ENCODE measurements at regions of chr1 and their contacts with region 1.

Region 1: DNA sequence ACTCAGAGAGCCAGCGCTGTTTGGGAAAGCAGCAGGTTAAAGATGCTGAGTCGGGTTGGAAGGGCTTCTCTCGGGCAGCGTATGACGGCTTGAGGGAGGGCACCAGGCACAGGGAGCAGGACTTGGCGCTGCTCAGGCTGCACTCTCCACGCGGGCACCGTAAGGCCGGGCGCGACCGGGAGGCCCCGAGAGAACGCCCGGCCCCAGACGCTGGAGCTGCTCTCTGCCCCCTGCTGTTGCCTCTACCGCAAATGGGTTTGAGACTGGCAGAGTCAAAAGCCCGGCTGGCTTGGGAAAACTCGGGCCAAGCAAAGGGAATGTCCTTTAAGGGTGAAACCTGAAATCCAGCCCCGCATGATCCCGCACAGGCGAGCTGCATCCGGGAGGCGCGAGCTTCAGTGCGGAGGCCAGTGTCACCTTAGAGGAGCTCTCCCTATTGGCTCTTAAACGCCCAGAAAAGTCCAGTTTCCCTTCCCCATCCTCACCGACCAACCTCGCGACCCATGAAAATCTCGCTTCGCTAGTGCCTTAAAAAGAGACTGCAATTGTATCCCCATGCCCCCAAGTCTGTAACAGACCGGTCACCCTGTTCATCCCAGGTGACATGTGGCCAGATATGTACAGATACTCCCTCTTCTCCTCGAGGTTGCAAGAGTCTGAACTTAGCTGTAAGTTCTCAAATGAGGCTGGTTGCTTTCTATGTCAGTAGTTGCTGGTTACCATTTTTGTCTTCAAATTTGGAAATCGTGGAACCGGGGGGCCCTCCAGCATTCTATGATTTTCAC is 1.1 kb downstream of the PRRX1 start:
- DNase-seq: no peak

Region 2: DNA sequence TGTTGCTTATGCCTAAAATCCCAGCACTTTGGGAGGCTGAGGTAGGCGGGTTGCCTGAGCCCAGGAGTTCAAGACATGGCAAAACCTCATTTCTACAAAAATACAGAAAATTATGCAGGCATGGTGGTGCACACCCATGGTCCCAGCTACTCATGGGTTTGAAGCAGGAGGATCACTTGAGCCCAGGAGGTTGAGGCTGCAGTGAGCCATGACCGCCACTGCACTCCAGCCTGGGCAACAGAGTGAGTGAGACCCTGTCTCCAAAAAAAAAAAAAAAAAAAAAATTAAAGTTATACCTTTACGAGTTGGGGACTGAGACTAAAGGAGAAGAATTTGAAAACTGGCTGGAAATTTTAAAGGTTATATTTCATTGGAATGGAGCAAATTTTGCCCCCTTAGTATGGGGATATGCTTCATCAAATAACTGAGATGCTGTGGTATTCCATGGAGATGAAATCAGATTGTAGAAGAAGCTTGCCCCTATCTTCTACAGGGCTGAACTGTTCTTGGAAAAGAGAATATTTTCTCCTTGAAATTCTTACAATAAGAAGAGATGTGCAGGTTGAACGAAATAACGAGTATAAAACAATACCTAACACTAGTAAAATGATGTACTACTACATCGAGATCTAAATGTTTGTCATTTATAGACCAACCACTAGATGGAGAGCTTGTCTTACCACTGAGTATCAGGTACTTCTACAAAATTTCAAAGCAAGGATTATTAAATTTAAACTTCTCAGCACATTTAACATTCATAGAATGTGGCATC is 736.4 kb before region 1 on chr1:
- intact Hi-C with region 1: loop called (anchors 10 kb)
- DNase-seq: no peak

Region 3: DNA sequence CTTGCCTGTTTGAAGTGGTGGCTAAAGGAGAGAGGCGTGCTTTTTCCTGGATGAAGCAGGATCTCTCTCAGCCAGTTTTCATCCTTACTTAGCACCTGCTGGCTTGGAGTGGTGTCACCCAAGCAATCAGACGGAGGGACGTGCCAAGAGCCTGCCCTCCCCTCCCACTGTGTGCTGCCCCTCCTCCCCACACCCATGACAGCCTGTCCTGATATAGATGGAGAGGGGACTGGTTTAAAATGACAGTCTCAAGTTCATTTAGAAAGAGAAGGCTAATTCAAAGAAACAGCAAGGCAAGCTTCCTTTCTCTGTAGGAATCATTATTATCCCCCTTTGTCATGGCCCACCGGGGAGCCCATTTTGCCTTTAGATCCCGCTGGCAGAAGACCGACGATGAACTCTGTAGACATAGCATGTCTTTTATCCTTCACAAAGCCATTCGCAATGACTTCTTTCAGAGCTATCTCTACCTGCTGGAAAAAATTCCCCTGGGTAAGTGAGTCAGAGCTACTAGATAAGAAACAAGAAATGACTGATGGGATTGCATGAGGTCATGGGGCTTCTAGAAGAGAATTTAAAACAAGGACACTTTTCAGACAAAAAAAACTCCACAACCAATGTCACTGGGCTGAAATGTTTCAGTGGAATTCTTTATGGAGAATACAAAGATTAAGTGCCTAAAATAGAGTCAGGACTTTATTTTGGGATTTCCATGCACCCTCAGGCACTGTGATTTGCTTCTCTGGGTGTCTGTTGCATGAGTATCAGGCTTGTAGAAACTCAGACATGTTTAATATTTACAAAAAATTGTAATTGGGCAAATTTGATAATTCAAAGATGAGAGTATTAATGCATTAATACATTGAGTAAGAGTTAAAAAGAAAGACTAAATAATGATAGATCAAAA is 519.0 kb before region 1 on chr1 and contains the start of gene NTMT2:
- intact Hi-C with region 1: loop called (anchors 2 kb)
- DNase-seq: peak; percentile 80
- total RNA-seq, gene NTMT2: 2.0 TPM

Region 4: DNA sequence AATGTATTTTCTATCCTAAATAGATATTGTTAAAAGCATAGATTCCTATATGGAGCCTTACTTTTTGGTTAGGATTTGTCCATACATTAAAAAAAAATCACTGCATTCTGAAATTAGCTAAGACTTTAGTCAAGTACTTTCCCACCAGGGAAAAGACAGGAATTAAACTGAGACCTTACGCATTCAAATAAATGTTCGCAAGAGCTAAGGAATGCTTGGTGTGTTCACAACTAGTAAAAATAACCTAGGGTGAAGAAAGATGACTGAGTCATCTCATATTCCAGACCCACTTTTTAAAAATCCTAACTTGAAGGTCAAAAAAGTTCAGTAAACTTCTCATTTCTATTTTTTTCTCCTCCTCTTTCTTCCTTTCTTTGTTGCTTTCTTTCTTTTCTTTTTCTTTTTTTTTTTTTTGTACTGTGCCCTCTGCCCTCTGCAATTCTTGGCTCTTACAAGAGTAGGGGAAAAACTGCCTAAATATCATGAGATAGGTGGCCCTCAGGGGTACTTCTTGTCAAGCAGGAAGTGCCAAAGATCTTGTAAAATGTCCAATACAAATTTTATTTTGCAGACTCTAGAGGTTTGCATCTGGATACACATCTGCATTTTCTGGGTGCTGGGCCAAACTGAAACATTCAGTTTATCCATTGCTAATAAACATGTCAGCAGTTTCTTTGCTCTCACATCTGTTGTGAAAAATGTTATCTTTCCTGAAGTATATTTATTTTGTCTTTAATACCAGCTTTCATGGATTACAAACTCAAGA is 254.4 kb before region 1 on chr1:
- intact Hi-C with region 1: loop called (anchors 5 kb)
- DNase-seq: no peak

Region 5: DNA sequence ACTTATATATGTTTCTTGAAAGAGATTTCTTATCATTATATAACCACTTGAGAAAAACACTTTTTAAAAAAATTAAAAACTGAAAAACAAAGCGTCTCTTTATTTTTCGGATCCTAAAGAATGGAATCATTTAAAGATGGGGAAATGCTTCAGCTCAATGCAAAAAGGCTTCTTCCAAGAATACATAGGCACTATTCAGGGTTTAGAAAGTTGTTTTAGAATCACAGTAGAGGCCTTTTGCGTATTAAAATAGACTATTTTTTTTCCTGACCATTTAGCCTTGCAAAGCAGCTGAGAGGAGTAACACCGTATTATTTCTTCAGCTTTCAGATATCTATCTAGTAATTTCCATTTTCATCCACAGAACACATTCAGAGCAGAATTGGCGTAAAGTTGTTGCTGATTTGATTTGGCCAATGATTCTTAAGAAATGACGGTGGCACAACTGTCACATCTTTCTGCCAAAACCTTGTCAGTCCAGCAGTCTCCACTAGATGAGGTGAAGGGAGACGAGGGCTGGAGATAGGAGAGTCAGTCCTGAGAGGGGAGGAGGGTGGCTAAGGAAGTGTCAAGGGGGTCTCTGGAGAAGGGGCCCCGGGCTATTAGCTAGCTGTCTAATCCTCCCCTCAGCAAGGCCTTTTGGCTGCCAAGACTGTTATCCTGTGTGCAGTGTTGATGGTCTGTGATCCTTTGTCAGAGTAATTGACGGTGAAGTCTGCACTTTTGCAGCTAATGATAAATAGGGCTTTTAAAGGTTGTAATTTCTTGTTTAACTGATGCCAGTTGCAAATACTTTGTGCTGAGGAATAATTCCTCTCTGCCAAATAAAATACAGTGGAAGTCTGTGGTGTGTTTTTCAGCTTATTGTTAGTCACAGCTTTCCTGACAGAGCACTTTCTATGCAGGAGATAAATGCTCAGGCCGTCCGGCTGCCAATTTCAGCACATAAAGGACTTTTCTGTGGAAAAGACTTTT is 33.6 kb after region 1 on chr1:
- intact Hi-C with region 1: loop called (anchors 2 kb)
- DNase-seq: no peak

Region 6: DNA sequence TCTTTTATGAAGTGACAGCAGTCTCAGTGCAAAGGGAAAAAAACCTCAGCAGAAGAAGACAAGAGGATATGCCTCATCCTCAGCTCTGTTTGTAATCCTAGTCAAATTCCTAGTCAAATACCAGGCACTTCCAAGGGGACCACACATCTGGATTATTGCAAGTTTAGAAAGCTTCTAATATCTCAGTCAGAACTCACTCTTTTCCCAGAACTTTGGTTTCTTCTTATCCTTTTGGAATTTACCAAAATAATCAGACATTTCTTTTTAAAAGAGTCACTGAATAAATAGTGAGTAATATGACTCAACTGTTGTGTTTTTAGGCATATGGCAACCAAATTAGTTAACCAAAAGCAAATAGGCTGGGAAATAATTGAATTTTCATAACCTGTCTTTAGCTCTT is 46.7 kb after region 1 on chr1:
- intact Hi-C with region 1: no loop called
- DNase-seq: no peak

Measured in cardiac septum (tissue), 1 donor.